ENCODE measurements at regions of chr17 and their contacts with region 1.

Region 1: DNA sequence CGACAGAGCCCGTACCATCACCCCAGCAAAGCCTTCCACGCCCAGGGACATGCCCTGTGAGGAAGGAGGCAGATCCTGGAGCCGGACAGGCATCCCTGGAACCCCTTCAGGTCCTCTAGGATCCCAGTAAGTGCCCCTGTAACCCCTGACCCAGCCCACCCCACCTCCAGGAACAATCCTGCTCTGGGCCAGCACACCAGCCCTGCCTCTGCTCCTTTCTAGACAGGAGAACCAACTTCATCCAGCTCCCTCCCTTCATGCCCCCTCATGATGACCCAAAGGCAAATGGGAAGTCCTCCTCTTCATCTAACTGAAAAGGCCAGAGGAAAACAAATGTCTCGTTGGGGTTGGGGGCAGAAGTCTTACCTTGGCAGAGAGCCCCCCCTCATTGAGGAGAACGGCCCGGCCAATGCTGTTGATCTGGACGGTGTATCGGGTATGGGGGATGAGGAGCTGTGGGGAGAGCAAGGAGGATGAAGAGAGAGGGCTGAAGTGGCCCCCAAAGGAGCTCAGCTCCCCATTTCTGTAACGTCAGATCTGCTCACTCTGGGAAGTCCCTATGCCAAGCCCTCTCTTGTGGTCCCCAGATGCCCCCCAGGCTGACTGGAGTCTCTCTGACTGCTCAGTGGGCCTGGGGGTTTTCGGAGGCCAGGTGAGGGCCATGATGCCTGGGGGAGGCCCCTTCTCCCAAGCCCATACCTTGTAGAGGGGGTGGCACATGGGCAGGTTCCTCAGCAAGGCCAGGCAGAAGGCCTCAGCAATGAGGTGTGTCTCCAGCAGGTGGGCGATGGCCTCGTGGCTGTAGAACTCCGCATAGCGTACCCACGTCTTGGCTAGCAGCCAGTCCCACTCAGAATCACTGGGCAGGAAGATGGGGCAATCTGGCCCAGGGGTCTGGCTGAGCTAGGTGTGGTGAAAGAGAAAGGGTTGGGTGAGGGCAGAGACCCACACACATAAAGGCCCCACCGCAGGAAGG is 10.9 kb downstream of the ALOX12B start:
- DNase-seq: no peak
- H3K4me3 ChIP-seq: no peak overlapping the region
- H3K27ac ChIP-seq: no peak overlapping the region
- H3K4me1 ChIP-seq: peaks cover 4 to 35% (median 27%) of the 10 kb centered on the region in 4 donors
- H3K27me3 ChIP-seq: peaks cover 0 to 91% of the 10 kb centered on the region in 2 donors
- CTCF ChIP-seq: no peak

Region 2: DNA sequence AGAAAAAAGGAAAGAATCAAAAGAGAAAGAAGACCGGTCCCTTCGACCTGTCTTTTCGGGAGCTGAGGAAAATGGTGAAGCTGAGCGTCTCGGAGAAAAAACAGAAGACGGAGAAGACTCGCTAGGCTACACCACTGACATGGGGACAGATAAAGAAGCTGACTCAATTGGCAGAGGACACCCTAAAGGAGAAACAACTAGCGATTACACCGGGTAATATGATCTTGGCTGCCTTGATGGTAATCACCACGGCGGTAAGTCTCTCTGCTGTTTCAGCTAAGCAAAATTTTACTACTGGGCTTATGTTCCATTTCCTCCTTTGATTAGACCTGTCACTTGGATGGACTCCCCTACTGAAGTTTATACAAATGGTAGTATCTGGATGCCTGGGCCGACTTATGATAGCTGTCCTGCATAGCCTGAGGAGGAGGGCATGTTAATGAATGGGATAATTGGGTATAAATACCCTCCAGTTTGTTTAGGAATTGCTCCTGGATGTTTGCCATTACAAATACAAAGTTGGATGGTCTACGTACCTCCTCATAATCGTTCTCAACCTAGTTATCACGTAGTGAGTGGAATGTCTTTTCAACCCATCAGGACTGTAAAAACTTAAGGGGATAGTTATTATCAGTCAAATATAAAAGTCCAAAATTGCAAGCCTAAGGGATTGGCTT is 13.6 kb before region 1 on chr17:
- intact Hi-C with region 1: loop called (anchors 2 kb)
- DNase-seq: no peak
- H3K4me3 ChIP-seq: no peak overlapping the region
- H3K27ac ChIP-seq: no peak overlapping the region
- H3K4me1 ChIP-seq: peaks cover 0 to 7% (median 3%) of the 10 kb centered on the region in 4 donors
- H3K27me3 ChIP-seq: peaks cover 0 to 81% of the 10 kb centered on the region in 2 donors
- CTCF ChIP-seq: no peak

Measured in tibial artery (tissue), 4 donors.